Colonic mucosa (tissue), 4 donors: ENCODE measurements at regions of chr2 and their contacts with region 1.

Region 1: GRCh38 chr2:106124905-106125405 is 69.1 kb downstream of the UXS1 start:
- DNase-seq: no peak
- H3K4me3 ChIP-seq: no peak overlapping the region
- H3K27ac ChIP-seq: no peak overlapping the region
- H3K4me1 ChIP-seq: peaks cover 3% of the 10 kb centered on the region
- H3K27me3 ChIP-seq: no peaks in the 10 kb centered on the region
- CTCF ChIP-seq: no peak

Region 2: DNA sequence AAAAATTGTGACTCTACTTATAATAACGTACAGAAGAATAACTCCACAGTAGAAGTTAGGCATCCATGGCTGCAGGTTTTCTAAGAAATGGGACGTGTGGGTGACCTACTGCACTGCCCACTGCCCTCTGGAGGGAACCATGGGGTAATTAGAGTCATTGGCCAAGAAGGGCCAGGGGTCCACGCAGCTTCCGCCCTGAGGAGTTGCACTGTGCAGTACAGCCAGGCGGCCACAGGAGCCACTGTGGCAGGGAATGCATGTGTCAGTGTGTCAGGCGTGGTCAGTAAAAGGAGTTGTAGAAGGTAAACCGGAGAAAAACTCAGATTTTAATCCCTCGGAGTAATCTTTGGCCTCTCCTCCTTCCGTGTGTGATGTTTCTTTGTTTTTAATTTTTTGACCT is 355.5 kb before region 1 on chr2:
- intact Hi-C with region 1: no loop called
- DNase-seq: no peak
- H3K4me3 ChIP-seq: no peak overlapping the region
- H3K27ac ChIP-seq: no peak overlapping the region
- H3K4me1 ChIP-seq: no peaks in the 10 kb centered on the region
- H3K27me3 ChIP-seq: no peaks in the 10 kb centered on the region
- CTCF ChIP-seq: no peak

Region 3: GRCh38 chr2:106175086-106175850 is 50.3 kb after region 1 on chr2:
- intact Hi-C with region 1: no loop called
- DNase-seq: no peak
- H3K4me3 ChIP-seq: no peak overlapping the region
- H3K27ac ChIP-seq: no peak overlapping the region
- H3K4me1 ChIP-seq: no peaks in the 10 kb centered on the region
- H3K27me3 ChIP-seq: no peaks in the 10 kb centered on the region
- CTCF ChIP-seq: no peak

Region 4: DNA sequence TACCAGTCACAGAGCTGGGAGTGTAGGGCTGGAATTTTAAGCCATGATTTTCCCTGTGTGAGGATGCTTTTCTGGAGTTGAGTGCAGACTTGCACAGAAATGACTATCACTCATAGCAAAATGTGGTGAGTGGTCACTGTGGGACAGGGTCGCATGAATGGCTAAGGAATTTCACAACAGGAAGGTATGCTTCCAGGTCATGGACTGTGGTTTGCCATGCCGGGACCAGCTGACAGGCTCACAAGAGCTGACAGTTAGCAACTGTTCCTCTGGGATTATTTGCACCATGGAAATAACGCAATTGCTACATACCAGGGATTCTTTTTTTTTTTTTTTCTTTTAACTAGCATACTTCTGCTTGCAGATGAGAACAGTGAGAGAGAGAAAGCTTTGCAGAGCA is 72.9 kb after region 1 on chr2:
- intact Hi-C with region 1: loop called (anchors 5 kb)
- DNase-seq: no peak
- H3K4me3 ChIP-seq: no peak overlapping the region
- H3K27ac ChIP-seq: no peak overlapping the region
- H3K4me1 ChIP-seq: no peaks in the 10 kb centered on the region
- H3K27me3 ChIP-seq: no peaks in the 10 kb centered on the region
- CTCF ChIP-seq: no peak

Region 5: DNA sequence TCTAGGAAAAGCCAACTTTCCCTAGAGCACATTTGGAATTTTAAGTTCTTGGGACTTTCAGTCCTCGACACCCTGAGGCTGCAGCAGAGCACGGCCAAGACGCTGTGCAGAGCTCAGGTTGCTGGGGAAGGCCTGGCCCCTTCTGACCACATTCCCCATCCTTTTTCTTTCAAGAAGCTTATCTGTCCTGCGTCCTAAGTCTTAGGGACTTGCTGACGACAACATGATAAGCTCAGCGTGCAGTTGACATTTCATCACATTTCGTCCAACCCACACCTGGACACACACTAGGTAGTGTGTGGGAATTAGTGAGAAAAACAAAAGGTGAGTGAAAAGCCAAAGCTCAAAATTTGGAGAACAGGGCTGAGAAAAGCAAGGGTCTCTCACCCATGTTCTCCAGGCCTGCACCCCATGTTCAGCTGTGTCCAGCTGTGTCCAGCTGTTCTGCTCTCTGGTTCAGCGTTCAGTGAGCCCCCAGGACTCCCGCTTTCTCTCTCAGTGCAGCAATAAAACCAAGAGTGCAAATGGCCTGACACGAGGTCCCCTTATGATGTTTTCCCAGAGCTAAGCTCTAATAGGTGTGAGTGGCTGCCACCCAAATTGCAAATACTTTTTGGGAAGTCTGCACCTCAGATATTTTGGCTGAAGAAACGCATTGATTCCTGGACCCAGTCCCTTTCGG is 241.4 kb after region 1 on chr2:
- intact Hi-C with region 1: no loop called
- DNase-seq: no peak
- H3K4me3 ChIP-seq: no peak overlapping the region
- H3K27ac ChIP-seq: no peak overlapping the region
- H3K4me1 ChIP-seq: no peaks in the 10 kb centered on the region
- H3K27me3 ChIP-seq: no peaks in the 10 kb centered on the region
- CTCF ChIP-seq: no peak